Naive thymus-derived CD4-positive, alpha-beta T cell (primary cell): ENCODE measurements at regions of chr21 and their contacts with region 1.

Region 1: DNA sequence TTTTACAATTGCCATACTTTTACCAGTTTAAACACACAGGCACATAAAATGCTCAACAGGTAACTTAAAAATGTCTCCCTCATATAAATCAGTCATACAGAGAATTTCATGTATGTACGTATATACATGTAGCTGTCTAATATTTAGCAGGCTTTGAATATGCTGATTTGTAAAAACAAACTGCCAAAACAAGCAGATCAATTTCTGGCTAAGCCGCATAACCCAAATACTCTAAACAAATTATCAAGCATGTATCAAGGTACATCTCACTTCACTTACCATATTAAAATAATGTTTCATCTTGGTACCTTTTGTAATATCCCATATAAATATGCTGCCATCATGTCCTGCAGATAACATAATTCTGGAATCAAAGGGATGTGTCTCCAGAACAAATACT is 43.8 kb downstream of the BRWD1 start:
- DNase-seq: no peak
- ATAC-seq: no peak
- H3K4me3 ChIP-seq: no peak overlapping the region
- H3K4me3 Mint-ChIP-seq: no peak overlapping the region
- H3K27ac ChIP-seq: no peak overlapping the region
- H3K27ac Mint-ChIP-seq: no peak overlapping the region
- H3K4me1 ChIP-seq: no peaks in the 10 kb centered on the region
- H3K4me1 Mint-ChIP-seq: peaks cover 0 to 7% (median 3%) of the 10 kb centered on the region in 7 donors
- H3K27me3 ChIP-seq: no peaks in the 10 kb centered on the region
- H3K27me3 Mint-ChIP-seq: no peaks in the 10 kb centered on the region

Region 2: DNA sequence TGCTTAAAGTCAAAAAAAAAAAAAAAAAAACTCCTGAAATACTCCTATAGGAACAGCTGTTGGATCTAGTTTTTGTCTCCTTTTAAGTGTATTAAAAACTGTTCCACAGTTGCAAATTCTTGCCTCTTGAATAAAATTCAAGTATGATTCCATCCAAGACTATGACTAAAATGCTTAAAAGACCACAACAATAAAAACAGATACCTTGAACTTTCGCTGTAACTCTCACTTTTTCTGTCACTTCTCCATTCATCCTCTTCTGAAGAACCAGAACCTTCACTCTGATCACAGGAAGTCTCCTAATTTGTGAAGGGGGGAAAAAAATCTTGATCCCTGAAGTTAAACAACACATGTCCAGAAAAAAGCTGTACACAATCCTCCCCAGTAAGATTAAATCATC is 31.3 kb before region 1 on chr21:
- CTCF ChIA-PET with region 1: no interaction called
- POLR2A ChIA-PET with region 1: interaction called, 3 read pairs
- intact Hi-C with region 1: loop called in 1 of 2 experiments (anchors 5 kb)
- DNase-seq: no peak
- ATAC-seq: no peak
- H3K4me3 ChIP-seq: no peak overlapping the region
- H3K4me3 Mint-ChIP-seq: no peak overlapping the region
- H3K27ac ChIP-seq: no peak overlapping the region
- H3K27ac Mint-ChIP-seq: peak overlapping the region in 6 of 9 donors; percentile 4 to 57 (median 34)
- H3K4me1 ChIP-seq: no peaks in the 10 kb centered on the region
- H3K4me1 Mint-ChIP-seq: peaks cover 11 to 46% (median 34%) of the 10 kb centered on the region in 7 donors
- H3K27me3 ChIP-seq: no peaks in the 10 kb centered on the region
- H3K27me3 Mint-ChIP-seq: no peaks in the 10 kb centered on the region

Region 3: DNA sequence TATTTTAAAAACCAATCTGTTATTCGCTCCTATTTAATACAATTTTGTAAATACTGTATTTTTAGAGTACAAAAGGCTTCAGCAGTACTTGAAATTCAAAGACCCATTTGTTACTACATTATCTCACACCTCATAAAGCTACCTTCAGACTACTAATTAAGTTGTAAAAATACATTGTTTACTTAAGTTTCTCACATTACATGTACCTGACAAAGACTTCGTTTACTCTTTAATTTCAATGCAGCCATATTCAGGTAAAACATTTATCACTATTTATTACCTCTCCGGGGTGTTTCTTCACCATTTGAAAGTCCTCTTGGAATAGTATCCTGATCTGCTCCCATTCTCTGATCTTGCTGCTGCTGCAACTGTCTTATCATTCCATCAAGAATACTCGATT is 11.4 kb before region 1 on chr21:
- CTCF ChIA-PET with region 1: interaction called, 3 read pairs
- POLR2A ChIA-PET with region 1: interaction called, 3 read pairs
- intact Hi-C with region 1: loop called in 1 of 2 experiments (anchors 2 kb)
- DNase-seq: no peak
- ATAC-seq: no peak
- H3K4me3 ChIP-seq: no peak overlapping the region
- H3K4me3 Mint-ChIP-seq: no peak overlapping the region
- H3K27ac ChIP-seq: no peak overlapping the region
- H3K27ac Mint-ChIP-seq: peak overlapping the region in 1 of 9 donors; percentile 14
- H3K4me1 ChIP-seq: no peaks in the 10 kb centered on the region
- H3K4me1 Mint-ChIP-seq: peaks cover 0 to 20% (median 6%) of the 10 kb centered on the region in 7 donors
- H3K27me3 ChIP-seq: no peaks in the 10 kb centered on the region
- H3K27me3 Mint-ChIP-seq: no peaks in the 10 kb centered on the region